ENCODE measurements at regions of chr14 and their contacts with region 1.

Region 1: GRCh38 chr14:102316743-102317563 is 2.6 kb upstream of the ZNF839 start:
- DNase-seq: no peak
- H3K4me3 ChIP-seq: peak overlapping the region; percentile 64
- CTCF ChIP-seq: peak; percentile 94

Region 2: GRCh38 chr14:102055216-102055918 is 261.6 kb before region 1 on chr14:
- CTCF ChIA-PET with region 1: interaction called, 40 read pairs
- POLR2A ChIA-PET with region 1: no interaction called
- DNase-seq: peak; percentile 33
- H3K4me3 ChIP-seq: no peak overlapping the region
- CTCF ChIP-seq: no peak

Region 3: GRCh38 chr14:102086972-102087761 is 229.8 kb before region 1 on chr14 and contains the start of gene HSP90AA1:
- CTCF ChIA-PET with region 1: interaction called, 12 read pairs
- POLR2A ChIA-PET with region 1: interaction called, 3 read pairs
- DNase-seq: no peak
- H3K4me3 ChIP-seq: peak within 1 kb of the TSS; percentile 82
- CTCF ChIP-seq: peak; percentile 14

Region 4: DNA sequence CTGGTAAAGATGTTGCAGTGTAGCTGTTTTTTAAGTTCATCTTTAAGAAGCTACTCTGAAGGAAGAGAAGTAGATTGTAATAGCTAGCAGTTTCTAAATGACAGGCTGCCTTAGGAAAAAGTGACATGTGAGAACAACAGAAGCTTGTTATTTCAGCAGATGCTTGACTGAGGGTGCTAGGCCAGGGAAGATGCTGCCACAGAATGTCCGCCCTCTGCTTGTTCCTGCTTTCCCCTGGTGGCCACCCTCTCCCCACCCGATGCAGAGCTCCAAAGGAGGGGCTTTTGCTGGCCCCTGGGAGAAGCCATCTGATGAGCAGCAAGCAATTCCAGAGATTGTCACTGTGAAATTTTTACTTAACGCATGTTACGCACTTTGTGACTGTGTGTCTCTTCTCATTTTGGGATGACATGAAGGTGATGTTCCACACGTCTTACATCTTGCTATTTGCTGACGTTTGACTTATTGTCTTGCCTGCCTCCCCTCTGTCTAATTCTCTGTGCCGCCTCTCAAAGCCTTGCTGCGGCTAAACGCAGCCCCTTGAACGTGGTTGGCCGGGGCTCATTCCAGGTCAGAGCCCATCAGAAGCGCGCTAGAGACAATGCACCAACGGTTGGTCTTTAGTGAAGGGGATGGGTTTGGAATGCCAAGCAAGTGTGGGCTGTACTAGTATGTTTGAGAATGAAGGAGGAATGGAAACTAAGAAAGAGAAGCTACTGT is 132.5 kb before region 1 on chr14:
- CTCF ChIA-PET with region 1: interaction called, 10 read pairs
- POLR2A ChIA-PET with region 1: no interaction called
- DNase-seq: no peak
- H3K4me3 ChIP-seq: no peak overlapping the region
- CTCF ChIP-seq: no peak

Region 5: DNA sequence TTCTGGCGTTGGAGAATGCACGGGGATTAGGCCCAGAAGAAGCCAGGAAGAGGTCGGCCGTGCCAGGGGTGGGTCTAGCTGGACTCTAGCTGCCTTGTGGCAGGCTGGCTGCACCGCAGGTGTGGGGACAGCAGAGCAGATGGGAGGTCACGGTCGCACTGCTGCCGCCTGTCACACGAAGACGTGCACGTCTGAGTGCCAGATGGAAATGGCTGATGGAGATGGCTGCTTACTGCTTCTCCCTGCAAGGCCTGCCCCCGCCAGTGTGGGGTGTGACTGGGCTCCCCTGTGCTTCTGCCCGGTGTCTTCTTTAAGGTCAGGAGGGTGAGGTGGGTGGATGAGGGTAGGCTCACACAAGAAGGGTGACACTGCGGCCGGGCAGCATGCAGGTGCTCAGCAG is 91.0 kb before region 1 on chr14:
- CTCF ChIA-PET with region 1: interaction called, 60 read pairs
- POLR2A ChIA-PET with region 1: no interaction called
- DNase-seq: no peak
- H3K4me3 ChIP-seq: no peak overlapping the region
- CTCF ChIP-seq: no peak

Region 6: GRCh38 chr14:102295270-102295669 is 21.7 kb before region 1 on chr14:
- CTCF ChIA-PET with region 1: interaction called, 19 read pairs
- POLR2A ChIA-PET with region 1: no interaction called
- DNase-seq: no peak
- H3K4me3 ChIP-seq: no peak overlapping the region
- CTCF ChIP-seq: peak; percentile 17

Measured in AG04449 (cell line).